Spleen (tissue), 13 donors: ENCODE measurements at regions of chr9 and their contacts with region 1.

Region 1: DNA sequence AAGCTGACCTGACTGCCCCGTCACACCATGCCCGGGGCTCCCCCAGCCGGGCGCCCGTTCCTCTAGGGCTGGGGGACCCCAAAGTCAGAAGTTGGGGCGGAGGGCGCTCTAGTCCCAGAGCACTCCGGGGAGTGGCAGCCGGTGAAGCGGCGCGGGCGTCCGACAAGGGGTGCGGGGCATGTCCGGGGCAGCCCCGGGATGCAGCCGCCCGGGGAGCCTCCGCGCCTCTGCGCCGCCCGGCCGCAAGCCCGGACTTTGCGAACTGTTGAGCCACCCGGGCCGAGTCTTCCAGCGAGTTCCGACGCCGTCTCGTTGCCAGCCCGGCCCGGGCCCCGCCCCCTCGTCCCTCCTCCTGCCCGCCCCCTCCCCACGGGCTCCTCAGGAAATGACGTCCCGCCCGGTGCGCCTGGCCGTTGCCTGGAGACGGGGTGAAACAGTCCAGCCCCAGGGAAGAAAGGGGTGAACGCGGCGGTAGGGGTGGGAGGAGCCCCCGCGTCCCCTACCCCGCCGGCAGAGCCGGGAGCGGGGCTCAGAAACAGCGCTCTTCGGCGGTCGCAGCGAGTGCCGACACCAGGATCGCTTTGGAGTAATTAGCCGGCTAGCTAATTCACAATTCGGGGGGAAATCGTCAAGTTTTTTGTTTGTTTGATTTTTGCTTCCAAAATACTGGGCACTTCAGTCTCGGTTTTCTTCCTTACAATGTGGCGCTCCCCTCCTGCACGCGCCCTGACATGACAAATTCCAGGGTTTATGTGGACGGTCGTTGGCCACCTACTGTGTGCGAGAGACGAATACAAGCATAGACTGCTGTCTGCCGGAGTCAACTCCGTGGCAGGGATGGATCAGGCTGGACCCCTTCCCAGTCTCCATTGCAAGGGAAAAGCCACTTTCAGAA is at the start of gene WHRN:
- DNase-seq: peak; percentile 97
- H3K4me3 ChIP-seq: peak within 1 kb of the TSS; percentile 56 to 81 (median 70)
- H3K27ac ChIP-seq: peak within 1 kb of the TSS; percentile 32 to 86 (median 72)
- H3K4me1 ChIP-seq: peaks cover 8 to 62% (median 48%) of the 10 kb centered on the region in 6 donors
- H3K27me3 ChIP-seq: peaks cover 0 to 39% (median 0%) of the 10 kb centered on the region in 7 donors
- CTCF ChIP-seq: peak in 1 of 11 experiments; percentile 17
- POLR2A ChIP-seq: peak in 1 of 3 donors; percentile 66
- total RNA-seq, gene WHRN: 11.8 to 51.6 (median 29.4) TPM

Region 2: GRCh38 chr9:114405294-114406034 is 100.0 kb before region 1 on chr9:
- intact Hi-C with region 1: loop called (anchors 5 kb)
- DNase-seq: peak; percentile 91
- H3K4me3 ChIP-seq: no peak overlapping the region
- H3K27ac ChIP-seq: no peak overlapping the region
- H3K4me1 ChIP-seq: peaks cover 0 to 9% (median 7%) of the 10 kb centered on the region in 6 donors
- H3K27me3 ChIP-seq: no peaks in the 10 kb centered on the region
- CTCF ChIP-seq: peak; percentile 81 to 97 (median 90)
- POLR2A ChIP-seq: no peak

Region 3: DNA sequence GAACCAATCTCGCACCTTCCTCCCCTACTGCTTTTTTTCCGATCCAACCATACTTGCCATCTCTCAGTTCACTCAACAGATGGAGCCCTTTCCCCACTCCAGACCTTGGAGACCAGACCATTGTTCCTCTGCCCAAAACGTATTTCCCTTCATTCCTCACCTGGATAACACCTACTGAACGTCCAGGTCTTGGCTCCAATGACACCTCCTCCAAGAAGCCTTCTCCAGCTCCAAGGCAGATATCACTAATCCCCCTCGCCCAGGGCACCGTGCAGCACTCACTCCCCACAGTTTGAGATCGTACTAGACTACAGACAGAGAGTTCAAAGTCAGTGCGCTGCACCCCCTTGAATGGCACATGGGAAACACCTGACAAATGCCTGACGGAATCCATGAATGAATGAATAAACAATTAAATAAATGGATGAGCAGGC is 70.5 kb before region 1 on chr9:
- intact Hi-C with region 1: no loop called
- DNase-seq: no peak
- H3K4me3 ChIP-seq: no peak overlapping the region
- H3K27ac ChIP-seq: no peak overlapping the region
- H3K4me1 ChIP-seq: peaks cover 0 to 21% (median 10%) of the 10 kb centered on the region in 6 donors
- H3K27me3 ChIP-seq: no peaks in the 10 kb centered on the region
- CTCF ChIP-seq: peak in 10 of 11 experiments; percentile 30 to 76 (median 52)
- POLR2A ChIP-seq: no peak